Dendritic cell treated with granulocyte-macrophage colony-stimulating factor and Interleukin-4, amounts not matched to agents 40 ng/mL and 50 ng/mL, for 4 days (primary cell): ENCODE measurements at regions of chr2 and their contacts with region 1.

Region 1: DNA sequence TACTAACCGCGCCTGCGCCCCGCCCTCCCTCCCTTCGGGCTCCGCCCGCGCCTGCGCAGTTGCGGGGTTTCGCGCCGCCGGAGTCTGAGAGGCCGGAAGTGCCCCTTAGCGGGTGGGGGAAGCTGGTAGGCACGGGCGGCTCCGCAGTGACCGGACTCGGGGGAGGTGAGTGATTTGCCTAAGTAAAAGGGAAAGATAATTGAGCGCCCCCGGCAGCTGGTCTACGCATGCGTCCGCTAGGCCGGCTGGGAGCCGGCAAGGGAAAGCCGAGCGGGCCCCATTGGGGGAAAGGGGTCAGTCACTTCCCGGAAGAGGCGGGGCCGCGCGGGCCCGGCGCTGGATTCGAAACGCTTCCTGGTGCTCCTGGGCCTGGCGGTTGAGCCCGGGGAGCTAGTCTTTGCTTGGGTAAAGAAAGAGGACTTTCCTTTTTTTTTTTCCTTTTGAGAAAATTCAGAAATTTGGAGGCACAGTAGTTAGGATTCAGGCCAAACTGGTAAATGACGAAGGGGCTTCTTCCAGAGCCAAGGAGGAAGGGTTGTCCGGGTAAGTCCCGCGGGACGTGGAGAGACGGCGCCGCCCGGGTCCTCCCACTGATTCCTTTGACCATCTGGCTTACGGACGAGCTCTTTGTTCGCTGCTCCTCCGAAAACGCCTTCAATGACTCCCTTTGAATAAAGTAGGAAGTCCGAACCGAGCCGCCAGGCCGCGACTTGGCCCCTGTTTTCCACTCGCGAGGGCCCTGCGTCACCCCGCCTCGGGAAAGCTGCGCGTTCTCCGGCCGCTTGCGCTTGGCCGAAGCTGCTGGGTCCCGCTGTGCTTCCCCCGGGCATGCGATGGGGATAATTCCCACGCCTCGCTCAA is at the starts of genes GEN1 and SMC6:
- H3K4me3 Mint-ChIP-seq: peak within 1 kb of the TSS; percentile 96
- H3K27ac Mint-ChIP-seq: peak within 1 kb of the TSS; percentile 99
- H3K4me1 Mint-ChIP-seq: peaks cover 24% of the 10 kb centered on the region
- H3K27me3 Mint-ChIP-seq: no peaks in the 10 kb centered on the region

Region 2: DNA sequence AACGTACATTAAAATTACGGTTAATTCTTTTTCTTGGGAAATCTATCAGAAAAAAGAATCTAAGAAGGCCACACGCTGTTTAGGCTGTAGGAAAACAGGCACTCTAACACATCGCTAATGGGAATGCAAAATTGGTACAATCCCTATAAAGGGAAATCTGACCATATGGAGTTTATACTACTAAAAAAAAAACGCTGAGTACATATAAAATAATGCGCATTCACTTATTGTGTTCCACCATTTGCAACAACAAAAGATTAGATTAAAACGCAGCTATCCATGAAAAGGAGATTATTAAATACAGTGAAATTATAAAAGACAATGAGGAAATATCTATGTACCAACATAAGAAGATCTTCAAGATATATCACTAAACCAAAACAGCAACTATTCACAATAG is 63.3 kb before region 1 on chr2:
- intact Hi-C with region 1: loop called (anchors 5 kb)
- H3K4me3 Mint-ChIP-seq: no peak overlapping the region
- H3K27ac Mint-ChIP-seq: no peak overlapping the region
- H3K4me1 Mint-ChIP-seq: no peaks in the 10 kb centered on the region
- H3K27me3 Mint-ChIP-seq: no peaks in the 10 kb centered on the region

Region 3: GRCh38 chr2:17813742-17814473 is 59.9 kb after region 1 on chr2:
- intact Hi-C with region 1: loop called (anchors 5 kb)
- H3K4me3 Mint-ChIP-seq: no peak overlapping the region
- H3K27ac Mint-ChIP-seq: peak overlapping the region; percentile 85
- H3K4me1 Mint-ChIP-seq: peaks cover 31% of the 10 kb centered on the region
- H3K27me3 Mint-ChIP-seq: no peaks in the 10 kb centered on the region